ENCODE measurements at regions of chr20 and their contacts with region 1.

Region 1: DNA sequence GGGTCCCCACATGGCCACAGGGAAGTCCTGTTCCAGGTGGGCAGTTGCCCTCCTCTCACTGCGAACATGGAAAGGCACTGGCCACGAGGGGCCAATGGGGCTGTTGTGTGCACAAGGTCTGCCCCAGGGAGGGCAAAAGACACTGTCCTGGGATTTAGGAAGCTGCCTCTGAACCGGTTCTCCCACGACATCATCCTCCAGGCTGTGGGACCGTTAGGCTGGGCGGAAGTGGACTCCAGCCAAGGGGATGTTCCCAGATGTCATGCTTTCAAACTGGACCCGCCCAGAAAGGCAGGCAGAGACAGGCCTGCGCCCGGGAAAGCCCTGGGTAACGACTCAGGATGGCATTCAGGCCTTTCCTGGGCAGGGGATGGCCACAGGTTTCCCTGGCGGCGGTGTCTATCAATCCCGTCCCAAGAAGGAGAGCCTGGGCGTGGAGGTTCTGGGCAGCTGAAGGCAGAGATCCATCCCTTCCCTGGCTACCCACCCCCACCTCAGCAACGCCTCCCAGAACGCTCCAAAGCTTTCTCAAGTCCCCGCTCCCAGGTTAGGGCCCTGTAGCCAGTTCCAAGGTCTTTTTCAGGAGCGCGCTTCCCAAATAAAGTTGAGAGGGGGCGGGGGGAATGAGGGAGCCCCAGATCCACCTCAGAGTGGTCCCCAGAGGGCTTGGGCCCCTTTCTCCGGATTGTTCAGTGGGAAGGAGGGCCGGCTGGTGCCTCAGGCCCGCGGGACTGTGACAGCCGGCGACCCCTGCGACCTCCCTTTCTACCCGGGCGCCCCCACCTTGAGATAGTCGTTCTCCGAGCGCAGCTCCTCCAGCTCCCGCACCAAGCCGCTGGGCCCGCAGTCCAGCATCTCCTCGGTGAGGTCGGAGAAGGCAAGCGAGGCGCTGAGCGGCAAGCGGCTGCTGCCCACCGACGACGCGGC is 13.8 kb upstream of the TLDC2 start:
- DNase-seq: peak; percentile 83
- ATAC-seq: peak; percentile 45
- H3K4me3 ChIP-seq: peak overlapping the region; percentile 62
- H3K27ac ChIP-seq: peak overlapping the region; percentile 76
- H3K4me1 ChIP-seq: peaks cover 31% of the 10 kb centered on the region
- H3K27me3 ChIP-seq: no peaks in the 10 kb centered on the region
- CTCF ChIP-seq: no peak
- POLR2A ChIP-seq: peak; percentile 69
- RAD21 ChIP-seq: no peak

Region 2: DNA sequence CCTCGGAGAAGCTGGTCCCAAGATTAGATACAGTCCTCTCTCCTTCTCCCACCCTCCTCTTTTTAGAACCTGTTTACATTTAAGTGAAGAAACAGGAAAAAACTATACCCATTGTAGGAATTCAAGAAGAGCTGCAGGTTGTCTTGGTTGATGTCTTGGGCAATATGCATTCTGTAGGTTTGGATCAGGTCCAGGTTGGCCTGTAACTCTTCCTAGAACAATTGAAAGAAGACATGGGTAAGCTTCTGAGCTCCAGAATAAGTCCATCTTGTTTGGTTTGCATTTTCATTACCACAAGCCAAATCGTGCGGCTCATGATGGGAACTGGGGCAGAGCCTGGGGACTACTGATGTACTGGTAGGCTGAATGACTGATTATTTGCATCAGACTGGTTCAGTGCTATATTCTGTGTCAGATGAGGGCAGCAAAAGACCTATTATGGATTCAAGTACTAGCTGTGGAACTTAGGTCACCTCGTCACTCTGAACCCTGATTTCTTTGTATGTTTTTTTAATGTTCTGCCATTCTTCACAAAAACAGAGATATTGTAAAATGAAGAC is 195.9 kb before region 1 on chr20:
- CTCF ChIA-PET with region 1: no interaction called
- POLR2A ChIA-PET with region 1: no interaction called
- dilution Hi-C with region 1: no loop called
- in situ Hi-C with region 1: no loop called
- intact Hi-C with region 1: loop called (anchors 10 kb)
- DNase-seq: peak; percentile 46
- ATAC-seq: peak; percentile 86
- H3K4me3 ChIP-seq: no peak overlapping the region
- H3K27ac ChIP-seq: no peak overlapping the region
- H3K4me1 ChIP-seq: no peaks in the 10 kb centered on the region; the same call in 1 of the 2 replicates
- H3K27me3 ChIP-seq: no peaks in the 10 kb centered on the region
- CTCF ChIP-seq: peak; percentile 46
- POLR2A ChIP-seq: no peak
- RAD21 ChIP-seq: peak; percentile 49

Region 3: DNA sequence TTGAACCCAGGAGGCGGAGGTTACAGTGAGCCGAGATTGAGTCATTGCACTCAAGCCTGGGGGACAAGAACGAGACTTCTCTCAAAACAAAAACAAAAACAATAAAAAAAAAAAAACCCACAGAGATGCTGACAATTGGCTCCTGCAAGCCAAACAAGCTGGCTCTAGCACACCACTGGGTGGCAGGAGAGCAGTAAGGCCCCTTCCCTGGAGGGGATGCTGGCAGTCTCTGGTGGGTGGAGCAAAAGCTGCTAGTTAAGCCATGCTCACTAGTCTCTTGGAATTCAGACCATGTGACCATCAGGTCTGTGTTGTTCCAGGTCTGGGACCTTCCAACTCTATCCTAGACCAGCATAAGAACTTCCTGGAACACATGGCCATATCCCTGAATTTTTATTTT is 69.7 kb before region 1 on chr20:
- CTCF ChIA-PET with region 1: no interaction called
- POLR2A ChIA-PET with region 1: no interaction called
- dilution Hi-C with region 1: no loop called
- in situ Hi-C with region 1: no loop called
- intact Hi-C with region 1: loop called (anchors 1 kb)
- DNase-seq: peak; percentile 72
- ATAC-seq: peak; percentile 94
- H3K4me3 ChIP-seq: no peak overlapping the region
- H3K27ac ChIP-seq: no peak overlapping the region
- H3K4me1 ChIP-seq: no peaks in the 10 kb centered on the region
- H3K27me3 ChIP-seq: no peaks in the 10 kb centered on the region
- CTCF ChIP-seq: peak; percentile 54
- POLR2A ChIP-seq: no peak
- RAD21 ChIP-seq: peak; percentile 68

Region 4: GRCh38 chr20:36808317-36809257 is 53.6 kb before region 1 on chr20:
- CTCF ChIA-PET with region 1: interaction called, 6 read pairs
- POLR2A ChIA-PET with region 1: no interaction called
- dilution Hi-C with region 1: loop called (anchors 10 kb)
- in situ Hi-C with region 1: no loop called
- intact Hi-C with region 1: no loop called
- DNase-seq: peak; percentile 89
- ATAC-seq: peak; percentile 82
- H3K4me3 ChIP-seq: no peak overlapping the region
- H3K27ac ChIP-seq: peak overlapping the region; percentile 22; the same call in 1 of the 2 replicates
- H3K4me1 ChIP-seq: peaks cover 7% of the 10 kb centered on the region
- H3K27me3 ChIP-seq: no peaks in the 10 kb centered on the region
- CTCF ChIP-seq: peak; percentile 59
- POLR2A ChIP-seq: no peak
- RAD21 ChIP-seq: peak; percentile 46

Region 5: DNA sequence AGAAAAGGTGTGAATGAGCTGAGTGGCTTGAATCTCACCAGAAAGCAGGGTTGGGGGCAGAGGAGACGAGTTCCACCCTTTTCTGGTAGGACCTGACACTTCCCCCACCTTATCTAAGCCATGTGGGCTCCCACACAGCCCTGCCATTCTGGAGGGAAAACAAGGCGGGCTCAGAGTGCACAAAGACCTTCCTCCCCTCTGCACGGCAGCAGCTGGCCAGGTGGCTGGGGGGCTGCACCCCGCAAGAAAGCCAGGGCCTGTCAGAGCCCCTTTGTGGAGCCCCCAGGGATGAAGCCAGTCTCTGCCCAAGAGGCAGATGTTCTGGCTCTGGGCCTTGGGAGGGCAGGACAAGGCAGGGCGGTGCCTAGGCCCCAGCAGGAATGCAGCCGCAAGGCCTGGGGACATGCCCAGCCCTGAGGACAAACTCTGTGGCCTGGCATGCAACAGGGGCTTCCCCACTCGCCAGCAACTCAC is 40.1 kb before region 1 on chr20:
- CTCF ChIA-PET with region 1: interaction called, 4 read pairs
- POLR2A ChIA-PET with region 1: no interaction called
- dilution Hi-C with region 1: no loop called
- in situ Hi-C with region 1: no loop called
- intact Hi-C with region 1: loop called (anchors 5 kb)
- DNase-seq: no peak
- ATAC-seq: no peak
- H3K4me3 ChIP-seq: no peak overlapping the region
- H3K27ac ChIP-seq: no peak overlapping the region
- H3K4me1 ChIP-seq: peaks cover 18% of the 10 kb centered on the region
- H3K27me3 ChIP-seq: no peaks in the 10 kb centered on the region
- CTCF ChIP-seq: no peak
- POLR2A ChIP-seq: no peak
- RAD21 ChIP-seq: no peak

Region 6: DNA sequence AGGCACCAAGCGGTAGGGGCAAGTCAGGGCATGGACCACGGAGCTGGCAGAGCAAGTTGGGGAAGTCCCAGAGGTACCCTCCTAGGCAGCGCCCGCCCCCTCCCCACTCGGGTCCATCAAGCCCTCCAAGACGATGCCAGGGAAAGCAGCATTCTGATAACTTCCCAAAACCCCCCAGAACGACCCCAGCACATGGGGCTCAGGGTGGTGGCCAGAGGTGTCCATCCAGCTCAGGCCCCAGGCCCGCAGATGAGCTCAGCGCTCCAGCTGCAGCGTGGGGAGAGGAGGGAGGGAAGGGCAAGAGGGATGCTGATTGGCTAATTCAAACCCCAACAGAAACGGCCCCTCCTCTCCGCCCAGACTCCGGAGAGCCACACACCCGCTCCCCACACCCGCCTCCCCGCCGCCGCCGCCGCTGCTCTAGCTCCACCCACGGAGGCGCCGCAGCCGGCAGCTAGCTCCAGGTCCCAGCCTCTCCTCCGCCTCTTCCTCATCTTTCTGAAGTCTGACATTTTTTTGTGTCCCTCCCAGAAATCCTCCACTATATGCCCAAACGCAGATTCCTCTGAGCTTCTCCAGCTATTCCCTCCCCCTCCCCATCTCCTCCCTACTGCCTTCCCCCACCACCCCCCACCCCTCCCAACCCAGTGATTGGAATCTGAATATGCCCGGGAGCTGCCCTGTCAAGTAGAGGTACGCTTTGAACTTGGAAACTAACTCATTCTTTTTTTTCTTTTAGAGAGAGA is 26.5 kb before region 1 on chr20:
- CTCF ChIA-PET with region 1: no interaction called
- POLR2A ChIA-PET with region 1: interaction called, 4 read pairs
- dilution Hi-C with region 1: no loop called
- in situ Hi-C with region 1: no loop called
- intact Hi-C with region 1: loop called (anchors 1 kb)
- DNase-seq: peak; percentile 96
- ATAC-seq: peak; percentile 90
- H3K4me3 ChIP-seq: no peak overlapping the region
- H3K27ac ChIP-seq: peak overlapping the region; percentile 86
- H3K4me1 ChIP-seq: peaks cover 42% of the 10 kb centered on the region
- H3K27me3 ChIP-seq: no peaks in the 10 kb centered on the region
- CTCF ChIP-seq: no peak
- POLR2A ChIP-seq: 0 out of 2 replicates have a peak, but pooled peaks have one; percentile 37
- RAD21 ChIP-seq: no peak; the same call in 1 of the 2 replicates